ENCODE measurements at regions of chr7 and their contacts with region 1.

Region 1: DNA sequence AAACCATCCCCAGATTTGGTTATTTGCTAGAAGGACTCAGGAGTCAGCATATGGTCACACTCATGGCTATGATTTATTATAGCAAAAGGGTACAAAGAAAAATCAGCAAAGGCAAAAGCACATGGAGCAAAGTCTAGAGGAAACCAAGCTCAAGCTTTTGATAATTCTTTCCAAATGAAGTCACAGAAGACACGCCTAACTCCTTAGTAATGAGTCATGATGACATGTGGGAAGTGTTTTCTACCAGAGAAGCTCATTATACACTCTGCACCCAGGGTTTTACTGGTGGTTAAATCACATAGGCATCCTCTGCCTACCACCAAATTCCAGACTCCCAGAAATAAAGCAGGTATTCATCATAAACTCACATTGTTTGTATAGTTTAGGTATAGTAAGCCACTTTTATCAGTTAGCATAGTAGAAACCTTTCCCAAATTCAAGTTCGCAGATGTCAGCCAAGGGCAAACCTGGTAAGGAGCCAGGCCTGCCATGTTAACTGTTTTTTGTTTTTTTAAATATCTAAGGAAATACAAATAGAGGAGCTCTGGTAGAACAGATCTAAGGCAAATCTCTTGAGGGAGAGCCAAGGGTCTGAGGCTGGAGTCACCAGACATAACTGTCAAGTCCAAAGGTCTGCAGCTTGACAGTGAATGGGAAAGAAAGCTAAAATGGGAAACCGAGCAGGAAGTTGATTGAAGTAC is 15.4 kb upstream of the HIBADH start:
- DNase-seq: no peak
- H3K4me3 ChIP-seq: no peak overlapping the region
- H3K27ac ChIP-seq: peak overlapping the region; percentile 61 to 71
- H3K4me1 ChIP-seq: peaks cover 0 to 32% (median 13%) of the 10 kb centered on the region in 4 donors
- H3K27me3 ChIP-seq: no peaks in the 10 kb centered on the region
- CTCF ChIP-seq: no peak

Region 2: DNA sequence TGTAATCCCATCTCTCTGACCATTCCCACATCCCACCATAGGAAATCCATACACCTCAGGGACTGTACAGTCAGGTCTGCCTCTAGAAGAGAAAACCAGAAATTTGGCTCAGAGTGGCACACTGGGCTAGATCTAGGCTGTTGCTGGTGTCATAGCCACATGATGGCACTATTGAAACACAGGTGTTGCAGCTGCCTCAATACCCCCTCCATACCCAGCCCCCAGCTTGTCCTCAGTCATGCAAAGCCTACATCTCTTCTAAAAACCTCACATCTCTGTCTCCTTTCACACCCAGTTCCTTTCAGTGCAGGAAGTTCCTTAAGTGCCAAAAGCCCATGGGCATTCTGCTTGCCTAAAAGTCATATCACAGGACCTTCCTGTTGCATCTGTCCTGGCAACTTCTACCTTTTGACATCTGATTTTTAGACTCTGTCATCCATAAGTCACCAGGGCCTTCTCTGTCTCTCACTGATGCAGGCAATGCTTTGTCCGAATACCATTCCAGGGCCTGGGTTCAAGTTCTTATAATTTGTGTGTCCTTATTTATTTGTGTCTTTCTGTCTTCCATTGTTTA is 11.6 kb after region 1 on chr7:
- intact Hi-C with region 1: loop called (anchors 1 kb)
- DNase-seq: no peak
- H3K4me3 ChIP-seq: no peak overlapping the region
- H3K27ac ChIP-seq: no peak overlapping the region
- H3K4me1 ChIP-seq: no peaks in the 10 kb centered on the region
- H3K27me3 ChIP-seq: no peaks in the 10 kb centered on the region
- CTCF ChIP-seq: no peak

Region 3: DNA sequence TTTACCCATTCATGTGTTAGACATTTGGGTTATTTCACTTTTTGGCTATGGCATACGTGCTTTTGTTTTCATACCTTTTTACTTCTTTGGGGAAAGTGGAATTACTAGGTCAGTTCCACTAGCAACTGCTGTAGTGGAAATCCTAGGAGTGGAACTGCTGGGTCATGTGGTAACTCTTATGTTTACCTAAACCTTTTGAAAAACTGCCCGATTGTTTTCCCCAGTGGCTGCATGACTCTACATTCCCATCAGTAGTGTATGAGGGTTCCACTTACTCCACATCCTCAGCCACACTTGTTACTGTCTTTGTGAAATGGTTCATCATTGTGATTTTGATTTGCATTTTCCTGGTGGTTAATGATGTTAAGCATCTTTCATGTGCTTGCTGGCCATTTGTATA is 144.2 kb after region 1 on chr7:
- intact Hi-C with region 1: no loop called
- DNase-seq: no peak
- H3K4me3 ChIP-seq: no peak overlapping the region
- H3K27ac ChIP-seq: no peak overlapping the region
- H3K4me1 ChIP-seq: no peaks in the 10 kb centered on the region
- H3K27me3 ChIP-seq: no peaks in the 10 kb centered on the region
- CTCF ChIP-seq: no peak